ENCODE measurements at regions of chr1 and their contacts with region 1.

Region 1: GRCh38 chr1:155172732-155173477 is at the start of gene KRTCAP2:
- DNase-seq: peak; percentile 98
- H3K4me3 Mint-ChIP-seq: peak within 1 kb of the TSS; percentile 87
- H3K27ac Mint-ChIP-seq: peak within 1 kb of the TSS; percentile 95
- H3K4me1 Mint-ChIP-seq: peaks cover 46% of the 10 kb centered on the region
- H3K27me3 Mint-ChIP-seq: no peaks in the 10 kb centered on the region
- CTCF ChIP-seq: peak; percentile 97
- total RNA-seq, gene KRTCAP2: 313 and 383 TPM in 2 replicates

Region 2: DNA sequence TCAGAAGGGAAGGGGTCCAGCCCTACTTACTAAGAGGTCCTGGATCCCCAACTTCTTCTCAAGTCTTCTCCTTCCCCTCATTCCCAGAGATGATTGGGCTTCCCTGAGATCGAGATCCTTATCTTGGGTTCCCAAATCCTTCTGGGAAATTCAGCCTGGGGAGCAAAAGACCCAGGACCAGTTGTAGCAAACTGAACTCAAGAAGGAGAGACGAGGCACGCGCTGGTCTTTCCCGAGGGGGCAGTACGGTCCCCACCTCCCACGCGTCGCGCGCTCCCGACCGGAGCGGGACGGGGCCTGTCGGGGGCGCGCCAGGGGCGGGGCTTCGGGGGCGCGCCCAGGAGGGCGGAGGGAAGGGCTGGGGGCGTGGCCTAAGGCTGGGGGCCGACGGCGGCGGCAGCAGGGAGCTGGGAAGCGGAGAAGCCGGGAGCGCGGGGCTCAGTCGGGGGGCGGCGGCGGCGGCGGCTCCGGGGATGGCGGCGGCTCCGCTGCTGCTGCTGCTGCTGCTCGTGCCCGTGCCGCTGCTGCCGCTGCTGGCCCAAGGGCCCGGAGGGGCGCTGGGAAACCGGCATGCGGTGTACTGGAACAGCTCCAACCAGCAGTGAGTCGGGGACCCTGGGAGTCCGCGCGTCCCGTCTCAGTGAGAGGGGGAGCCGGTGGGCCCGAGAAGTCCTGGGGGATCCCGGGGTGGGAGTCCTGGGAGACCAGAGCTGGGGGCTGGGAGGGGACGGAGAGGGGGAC is 94.3 kb before region 1 on chr1 and contains the start of gene EFNA3:
- CTCF ChIA-PET with region 1: interaction called, 78 read pairs
- POLR2A ChIA-PET with region 1: interaction called, 13 read pairs
- intact Hi-C with region 1: no loop called
- DNase-seq: peak; percentile 75
- H3K4me3 Mint-ChIP-seq: peak within 1 kb of the TSS; percentile 77
- H3K27ac Mint-ChIP-seq: peak within 1 kb of the TSS; percentile 57
- H3K4me1 Mint-ChIP-seq: peaks cover 37% of the 10 kb centered on the region
- H3K27me3 Mint-ChIP-seq: peaks cover 30% of the 10 kb centered on the region
- CTCF ChIP-seq: no peak
- total RNA-seq, gene EFNA3: 1.6 and 1.7 TPM in 2 replicates

Region 3: DNA sequence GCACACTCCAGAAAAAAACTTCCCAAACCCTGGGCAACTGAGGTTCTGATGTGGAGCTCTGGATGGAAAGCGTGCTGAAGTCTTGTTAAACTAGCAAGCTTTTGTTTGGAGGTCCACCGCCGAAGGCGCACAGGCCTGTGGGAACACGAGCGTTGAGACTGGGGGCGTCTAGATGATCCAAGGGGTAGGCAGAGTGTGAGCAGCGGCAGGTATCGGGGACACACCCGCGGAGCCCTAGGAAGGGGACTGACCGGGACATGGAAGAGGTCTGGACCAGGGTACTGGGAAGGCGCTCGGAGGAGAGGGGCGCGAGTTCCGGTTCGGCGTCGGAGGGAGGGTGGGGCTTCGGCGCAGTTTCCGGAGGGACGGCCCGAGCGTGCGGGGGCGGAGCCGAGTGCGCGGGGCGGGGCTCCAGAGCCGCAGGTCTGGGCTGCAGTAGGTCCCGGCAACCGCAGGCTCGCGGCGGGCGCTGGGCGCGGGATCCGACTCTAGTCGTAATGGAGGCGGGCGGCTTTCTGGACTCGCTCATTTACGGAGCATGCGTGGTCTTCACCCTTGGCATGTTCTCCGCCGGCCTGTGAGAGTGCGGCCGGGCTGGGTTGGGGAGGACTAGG is 37.4 kb before region 1 on chr1 and contains the start of gene SLC50A1:
- CTCF ChIA-PET with region 1: interaction called, 36 read pairs
- POLR2A ChIA-PET with region 1: interaction called, 75 read pairs
- intact Hi-C with region 1: no loop called
- DNase-seq: peak; percentile 94
- H3K4me3 Mint-ChIP-seq: peak within 1 kb of the TSS; percentile 80
- H3K27ac Mint-ChIP-seq: peak within 1 kb of the TSS; percentile 94
- H3K4me1 Mint-ChIP-seq: peaks cover 50% of the 10 kb centered on the region
- H3K27me3 Mint-ChIP-seq: no peaks in the 10 kb centered on the region
- CTCF ChIP-seq: no peak
- total RNA-seq, gene SLC50A1: 91.2 and 97.8 TPM in 2 replicates

Region 4: GRCh38 chr1:155185351-155186066 is 12.6 kb after region 1 on chr1:
- CTCF ChIA-PET with region 1: interaction called, 18 read pairs
- POLR2A ChIA-PET with region 1: interaction called, 11 read pairs
- intact Hi-C with region 1: no loop called
- DNase-seq: no peak
- H3K4me3 Mint-ChIP-seq: no peak overlapping the region
- H3K27ac Mint-ChIP-seq: no peak overlapping the region
- H3K4me1 Mint-ChIP-seq: peaks cover 21% of the 10 kb centered on the region
- H3K27me3 Mint-ChIP-seq: no peaks in the 10 kb centered on the region
- CTCF ChIP-seq: no peak

Region 5: GRCh38 chr1:155208541-155209311 is 35.8 kb after region 1 on chr1 and contains the start of gene MTX1:
- CTCF ChIA-PET with region 1: interaction called, 23 read pairs
- POLR2A ChIA-PET with region 1: interaction called, 10 read pairs
- intact Hi-C with region 1: loop called (anchors 1 kb)
- DNase-seq: peak; percentile 79
- H3K4me3 Mint-ChIP-seq: peak within 1 kb of the TSS; percentile 76
- H3K27ac Mint-ChIP-seq: peak within 1 kb of the TSS; percentile 91
- H3K4me1 Mint-ChIP-seq: peaks cover 22% of the 10 kb centered on the region
- H3K27me3 Mint-ChIP-seq: no peaks in the 10 kb centered on the region
- CTCF ChIP-seq: no peak
- total RNA-seq, gene MTX1: 64.6 and 67.4 TPM in 2 replicates

Region 6: DNA sequence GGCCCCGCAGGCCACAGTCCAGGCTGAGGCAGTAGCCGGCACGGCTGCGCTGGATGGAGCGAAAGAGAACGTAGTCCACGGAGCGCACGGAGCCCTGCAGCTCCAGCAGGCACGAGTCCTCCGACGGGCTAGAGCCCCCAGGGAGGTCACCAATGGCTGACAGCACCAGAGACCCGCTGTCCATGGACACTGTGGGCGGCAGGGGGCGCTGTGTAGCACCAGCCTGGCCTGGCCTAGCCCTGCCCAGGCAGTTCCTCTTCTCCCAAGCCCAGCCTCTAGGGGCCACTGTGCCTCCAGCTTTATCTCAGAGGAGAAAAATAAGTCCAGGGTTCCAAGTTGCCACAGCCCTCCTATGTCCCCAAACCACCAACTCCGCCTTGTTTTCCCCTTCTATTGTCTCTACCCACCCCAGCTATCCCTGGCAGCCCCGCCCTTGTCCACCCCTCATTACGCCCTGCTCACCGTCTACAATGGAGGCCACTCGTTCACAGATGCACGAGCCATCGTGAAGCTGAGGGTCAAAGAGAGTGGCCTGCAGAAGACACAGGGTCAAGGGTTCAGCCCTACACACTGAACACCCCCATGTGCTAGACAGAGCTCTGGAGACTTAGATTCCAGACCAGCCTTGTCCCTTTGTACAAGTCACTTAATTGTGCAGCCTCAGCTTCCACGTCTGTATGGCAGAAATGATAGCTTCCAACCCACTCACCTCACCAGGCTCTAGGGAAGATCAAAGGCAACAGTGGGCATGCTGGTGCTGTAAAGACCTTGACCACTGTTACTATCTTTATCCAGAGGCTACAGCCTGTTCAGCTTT is 77.9 kb after region 1 on chr1:
- CTCF ChIA-PET with region 1: interaction called, 10 read pairs
- POLR2A ChIA-PET with region 1: interaction called, 4 read pairs
- intact Hi-C with region 1: no loop called
- DNase-seq: peak; percentile 94
- H3K4me3 Mint-ChIP-seq: no peak overlapping the region
- H3K27ac Mint-ChIP-seq: no peak overlapping the region
- H3K4me1 Mint-ChIP-seq: peaks cover 19% of the 10 kb centered on the region
- H3K27me3 Mint-ChIP-seq: no peaks in the 10 kb centered on the region
- CTCF ChIP-seq: peak; percentile 100

Region 7: DNA sequence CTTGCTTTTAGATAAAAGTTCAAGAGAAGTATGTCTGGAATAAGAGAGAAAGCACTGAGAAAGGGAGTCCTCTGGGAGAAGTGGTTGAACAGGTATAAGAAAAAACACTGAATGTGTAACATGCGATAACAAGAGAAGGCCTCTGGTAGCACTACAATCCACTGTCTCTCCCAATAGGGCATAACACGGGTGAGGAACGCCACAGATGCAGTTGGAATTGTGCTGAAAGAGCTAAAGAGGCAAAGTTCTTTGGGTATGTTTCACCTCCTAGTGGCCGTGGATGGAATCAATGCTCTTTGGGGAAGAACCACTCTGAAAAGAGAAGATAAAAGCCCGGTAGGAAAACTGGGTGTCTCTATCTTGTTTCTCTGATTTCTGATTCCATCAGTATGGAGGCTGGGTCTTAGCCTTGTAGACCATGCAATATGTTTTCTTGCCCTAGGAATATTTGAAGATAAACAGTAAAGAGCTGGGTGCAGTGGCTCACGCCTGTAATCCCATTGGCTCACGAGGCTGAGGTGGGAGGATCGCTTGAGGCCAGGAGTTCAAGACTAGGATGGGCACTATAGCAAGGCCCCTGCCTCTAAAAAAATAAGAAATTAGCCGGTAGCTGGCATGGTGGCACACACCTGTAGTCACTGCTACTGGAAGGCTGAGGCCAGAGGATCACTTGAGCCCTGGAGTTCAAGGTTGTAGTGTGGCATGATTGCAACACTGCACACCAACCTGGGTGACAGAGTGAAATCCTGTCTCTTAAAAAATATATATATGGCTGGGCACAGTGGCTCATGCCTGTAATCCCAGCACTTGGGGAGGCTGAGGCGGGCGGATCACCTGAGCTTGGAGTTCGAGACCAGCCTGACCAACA is 556.4 kb after region 1 on chr1:
- CTCF ChIA-PET with region 1: no interaction called
- POLR2A ChIA-PET with region 1: no interaction called
- intact Hi-C with region 1: no loop called
- DNase-seq: peak; percentile 80
- H3K4me3 Mint-ChIP-seq: no peak overlapping the region
- H3K27ac Mint-ChIP-seq: peak overlapping the region; percentile 39
- H3K4me1 Mint-ChIP-seq: no peaks in the 10 kb centered on the region
- H3K27me3 Mint-ChIP-seq: no peaks in the 10 kb centered on the region
- CTCF ChIP-seq: peak; percentile 59

Measured in MCF 10A (cell line).